ENCODE measurements at regions of chr1 and their contacts with region 1.

Region 1: GRCh38 chr1:52552505-52553361 is at the start of gene TUT4:
- DNase-seq: peak; percentile 63 to 70
- H3K4me3 ChIP-seq: peak within 1 kb of the TSS; percentile 66
- H3K27ac ChIP-seq: peak within 1 kb of the TSS; percentile 79
- H3K4me1 ChIP-seq: peaks cover 30% of the 10 kb centered on the region
- H3K27me3 ChIP-seq: no peaks in the 10 kb centered on the region
- CTCF ChIP-seq: no peak
- total RNA-seq, gene TUT4: 76.8 and 78.3 TPM in 2 replicates

Region 2: GRCh38 chr1:52424231-52424636 is 128.5 kb before region 1 on chr1:
- CTCF ChIA-PET with region 1: no interaction called
- POLR2A ChIA-PET with region 1: interaction called, 17 read pairs
- intact Hi-C with region 1: no loop called
- DNase-seq: no peak
- H3K4me3 ChIP-seq: no peak overlapping the region
- H3K27ac ChIP-seq: no peak overlapping the region
- H3K4me1 ChIP-seq: peaks cover 25% of the 10 kb centered on the region
- H3K27me3 ChIP-seq: no peaks in the 10 kb centered on the region
- CTCF ChIP-seq: no peak

Region 3: DNA sequence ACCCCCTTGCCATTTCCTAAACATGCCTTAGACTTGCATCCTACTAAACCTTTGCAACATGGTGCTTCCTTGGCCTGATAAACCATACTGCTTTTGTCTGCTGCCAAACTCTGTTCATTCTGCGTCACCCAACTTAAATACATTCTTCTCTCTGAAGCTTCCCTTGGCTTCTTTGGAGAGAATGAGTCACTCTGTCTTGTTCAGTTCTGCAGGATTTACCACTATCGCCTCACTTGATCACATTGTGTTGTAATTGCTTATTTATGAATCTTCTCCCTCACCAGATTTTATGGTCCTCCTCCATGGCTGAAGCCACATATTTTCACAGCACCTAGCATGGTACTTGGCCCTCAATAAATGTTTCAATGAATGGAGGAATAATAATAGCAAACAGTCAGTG is 21.9 kb after region 1 on chr1:
- CTCF ChIA-PET with region 1: no interaction called
- POLR2A ChIA-PET with region 1: interaction called, 14 read pairs
- intact Hi-C with region 1: no loop called
- DNase-seq: peak; percentile 31 to 93
- H3K4me3 ChIP-seq: no peak overlapping the region
- H3K27ac ChIP-seq: no peak overlapping the region
- H3K4me1 ChIP-seq: peaks cover 12% of the 10 kb centered on the region
- H3K27me3 ChIP-seq: no peaks in the 10 kb centered on the region
- CTCF ChIP-seq: no peak

Region 4: DNA sequence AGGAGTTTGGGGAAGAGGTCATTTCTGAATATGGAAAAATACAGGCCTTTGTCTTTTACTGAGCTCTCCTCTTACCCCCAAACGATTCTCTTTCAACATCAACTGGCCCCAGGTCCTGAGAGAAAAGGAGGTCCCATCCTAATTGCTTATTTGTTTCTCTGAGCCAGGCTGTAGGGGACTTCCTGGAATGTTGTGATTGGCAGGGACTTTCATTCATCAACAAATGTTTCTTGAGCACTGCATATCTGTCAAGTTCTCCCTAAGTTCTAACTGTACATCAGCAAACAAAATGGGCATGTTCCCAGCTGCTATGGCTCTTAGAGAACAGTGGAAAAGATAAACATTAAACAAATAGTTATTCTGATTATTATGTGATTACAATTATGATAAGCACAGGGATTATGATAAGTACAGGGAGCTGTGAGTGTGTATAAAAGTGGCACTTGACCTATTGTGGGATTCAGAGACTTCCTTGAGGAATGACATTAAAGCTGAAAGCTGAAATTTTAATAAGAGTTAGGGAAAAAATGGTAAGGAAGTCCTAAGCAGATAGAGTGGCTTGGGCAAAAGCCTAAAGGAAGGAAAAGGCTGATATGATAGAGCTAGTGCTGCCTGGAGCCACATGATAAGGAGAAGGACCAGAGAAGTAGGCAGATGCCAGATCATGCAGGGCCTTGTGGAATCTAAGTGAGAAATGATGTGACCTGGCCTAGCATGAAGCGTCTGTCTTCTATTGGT is 61.1 kb after region 1 on chr1:
- CTCF ChIA-PET with region 1: no interaction called
- POLR2A ChIA-PET with region 1: interaction called, 15 read pairs
- intact Hi-C with region 1: no loop called
- DNase-seq: no peak
- H3K4me3 ChIP-seq: no peak overlapping the region
- H3K27ac ChIP-seq: no peak overlapping the region
- H3K4me1 ChIP-seq: no peaks in the 10 kb centered on the region
- H3K27me3 ChIP-seq: no peaks in the 10 kb centered on the region
- CTCF ChIP-seq: no peak

Region 5: GRCh38 chr1:52662645-52663313 is 110.0 kb after region 1 on chr1:
- CTCF ChIA-PET with region 1: interaction called, 4 read pairs
- POLR2A ChIA-PET with region 1: no interaction called
- intact Hi-C with region 1: loop called (anchors 1 kb)
- DNase-seq: peak; percentile 66 to 98
- H3K4me3 ChIP-seq: peak overlapping the region; percentile 39; the same call in 1 of the 2 replicates
- H3K27ac ChIP-seq: peak overlapping the region; percentile 26; the same call in 1 of the 2 replicates
- H3K4me1 ChIP-seq: peaks cover 37% of the 10 kb centered on the region
- H3K27me3 ChIP-seq: no peaks in the 10 kb centered on the region
- CTCF ChIP-seq: no peak; the same call in 1 of the 2 replicates

Region 6: DNA sequence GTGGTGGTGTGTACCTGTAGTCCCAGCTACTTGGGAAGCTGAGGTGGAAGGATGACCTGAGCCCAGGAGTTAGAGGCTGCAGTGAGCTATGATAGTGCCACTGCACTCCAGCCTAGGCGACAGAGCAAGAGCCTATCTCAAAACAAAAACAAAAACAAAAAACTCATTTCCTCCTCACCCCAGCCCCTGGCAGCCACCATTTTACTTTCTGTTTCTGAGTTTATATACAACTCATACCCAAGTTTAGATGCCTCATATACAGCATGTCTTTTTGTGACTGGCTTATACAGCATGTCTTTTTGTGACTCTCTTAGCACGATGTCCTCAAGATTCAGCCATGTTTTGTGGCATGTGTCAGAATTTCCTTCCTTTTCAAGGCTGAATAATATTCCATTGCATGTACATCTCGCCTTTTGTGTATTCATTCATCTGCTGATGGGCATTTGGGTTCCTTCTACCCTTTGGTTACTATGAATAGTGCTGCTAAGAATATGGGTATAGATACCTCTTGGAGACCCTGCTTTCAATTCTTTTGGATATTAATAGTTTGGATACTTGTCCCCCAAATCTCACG is 130.7 kb after region 1 on chr1:
- CTCF ChIA-PET with region 1: interaction called, 7 read pairs
- POLR2A ChIA-PET with region 1: interaction called, 8 read pairs
- intact Hi-C with region 1: loop called (anchors 2 kb)
- DNase-seq: no peak
- H3K4me3 ChIP-seq: no peak overlapping the region
- H3K27ac ChIP-seq: no peak overlapping the region
- H3K4me1 ChIP-seq: no peaks in the 10 kb centered on the region
- H3K27me3 ChIP-seq: no peaks in the 10 kb centered on the region
- CTCF ChIP-seq: no peak

Measured in PC-9 (cell line).